Activated naive CD8-positive, alpha-beta T cell treated with anti-CD3 and anti-CD28 coated beads, Interleukin-2, amount 10 ng/mL, durations not matched to agents 7 days and 5 days (primary cell): ENCODE measurements at regions of chr4 and their contacts with region 1.

Region 1: GRCh38 chr4:99088481-99089365 is at the start of gene ADH5:
- DNase-seq: peak; percentile 89
- ATAC-seq: peak; percentile 97
- H3K4me3 Mint-ChIP-seq: peak within 1 kb of the TSS; percentile 95
- H3K27ac Mint-ChIP-seq: peak within 1 kb of the TSS; percentile 98
- H3K4me1 Mint-ChIP-seq: peaks cover 29% of the 10 kb centered on the region
- H3K27me3 Mint-ChIP-seq: no peaks in the 10 kb centered on the region
- total RNA-seq, gene ADH5: 97.1 to 103 TPM

Region 2: DNA sequence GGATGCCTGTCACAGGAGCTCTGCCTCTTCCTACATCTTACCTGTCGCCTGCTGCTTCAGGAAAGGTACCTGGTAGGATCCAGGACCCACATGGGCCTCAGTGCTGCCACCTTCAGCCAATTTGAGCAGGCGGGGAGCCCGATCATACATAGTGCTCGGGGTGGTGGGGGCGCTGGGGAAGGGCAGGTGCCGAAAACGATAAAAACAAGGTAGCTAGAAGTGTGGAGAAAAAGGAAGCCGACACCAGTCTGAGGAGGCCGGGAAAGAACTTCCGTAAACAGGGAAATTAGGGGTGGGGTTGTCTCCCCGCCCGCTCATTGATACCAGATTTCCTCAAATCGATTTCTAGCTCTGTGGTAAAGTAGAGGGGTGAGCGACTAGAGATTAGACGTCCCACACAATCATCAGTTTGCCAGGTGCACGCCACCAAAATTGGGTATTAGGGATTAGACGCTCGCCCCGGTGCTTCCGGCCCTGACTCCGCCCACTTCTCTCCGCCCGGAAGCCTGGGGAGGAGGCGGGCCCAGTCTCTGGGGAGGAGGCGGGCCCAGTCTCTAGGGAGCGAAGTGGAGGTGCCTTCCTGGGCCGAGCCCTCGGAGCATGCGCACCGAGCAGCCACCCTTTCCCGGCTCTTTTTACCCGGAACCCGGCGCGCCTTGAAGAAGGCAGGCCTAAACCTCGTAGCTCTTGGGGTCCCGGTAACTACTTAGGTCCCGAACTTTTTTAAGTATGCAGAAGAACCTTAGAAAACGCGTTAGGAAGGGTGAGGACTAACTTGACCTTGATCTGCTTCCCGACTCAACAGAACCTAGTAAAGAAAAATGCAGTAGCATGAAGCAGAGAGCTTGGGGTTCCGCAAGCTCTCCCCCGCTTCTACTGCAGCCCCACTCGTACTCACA is 945.5 kb before region 1 on chr4 and contains the start of gene STPG2:
- POLR2A ChIA-PET with region 1: interaction called, 12 read pairs
- DNase-seq: peak; percentile 94
- ATAC-seq: peak; percentile 100
- H3K4me3 Mint-ChIP-seq: peak within 1 kb of the TSS; percentile 91
- H3K27ac Mint-ChIP-seq: peak within 1 kb of the TSS; percentile 97
- H3K4me1 Mint-ChIP-seq: peaks cover 16% of the 10 kb centered on the region
- H3K27me3 Mint-ChIP-seq: no peaks in the 10 kb centered on the region
- total RNA-seq, gene STPG2: not detected

Region 3: GRCh38 chr4:99054428-99054994 is 34.2 kb before region 1 on chr4:
- POLR2A ChIA-PET with region 1: interaction called, 13 read pairs
- DNase-seq: no peak
- ATAC-seq: no peak
- H3K4me3 Mint-ChIP-seq: no peak overlapping the region
- H3K27ac Mint-ChIP-seq: peak overlapping the region; percentile 54
- H3K4me1 Mint-ChIP-seq: peaks cover 27% of the 10 kb centered on the region
- H3K27me3 Mint-ChIP-seq: no peaks in the 10 kb centered on the region